ENCODE measurements at regions of chr17 and their contacts with region 1.

Region 1: GRCh38 chr17:63611354-63611753 is 10.7 kb downstream of the TACO1 start:
- DNase-seq: no peak
- H3K4me3 ChIP-seq: no peak overlapping the region
- H3K27ac ChIP-seq: no peak overlapping the region
- H3K4me1 ChIP-seq: no peaks in the 10 kb centered on the region
- H3K27me3 ChIP-seq: no peaks in the 10 kb centered on the region
- CTCF ChIP-seq: no peak
- EP300 ChIP-seq: no peak
- POLR2A ChIP-seq: no peak

Region 2: GRCh38 chr17:63419949-63420867 is 191.1 kb before region 1 on chr17:
- intact Hi-C with region 1: loop called in 3 of 4 experiments (anchors 5 kb)
- DNase-seq: no peak
- H3K4me3 ChIP-seq: no peak overlapping the region
- H3K27ac ChIP-seq: no peak overlapping the region
- H3K4me1 ChIP-seq: no peaks in the 10 kb centered on the region
- H3K27me3 ChIP-seq: no peaks in the 10 kb centered on the region
- CTCF ChIP-seq: no peak
- EP300 ChIP-seq: no peak
- POLR2A ChIP-seq: no peak

Region 3: GRCh38 chr17:63425482-63425881 is 185.9 kb before region 1 on chr17:
- intact Hi-C with region 1: loop called (anchors 5 kb)
- DNase-seq: peak; percentile 73 to 81 (median 78)
- H3K4me3 ChIP-seq: no peak overlapping the region
- H3K27ac ChIP-seq: no peak overlapping the region
- H3K4me1 ChIP-seq: peaks cover 1% of the 10 kb centered on the region
- H3K27me3 ChIP-seq: no peaks in the 10 kb centered on the region
- CTCF ChIP-seq: peak; percentile 51 to 89 (median 87)
- EP300 ChIP-seq: no peak
- POLR2A ChIP-seq: no peak

Region 4: GRCh38 chr17:63549946-63550807 is 61.2 kb before region 1 on chr17 and contains the start of gene DCAF7:
- intact Hi-C with region 1: loop called in 1 of 4 experiments (anchors 10 kb)
- DNase-seq: peak; percentile 99 to 100 (median 100)
- H3K4me3 ChIP-seq: peak within 1 kb of the TSS; percentile 99
- H3K27ac ChIP-seq: peak within 1 kb of the TSS; percentile 51 to 85
- H3K4me1 ChIP-seq: peaks cover 7% of the 10 kb centered on the region
- H3K27me3 ChIP-seq: no peaks in the 10 kb centered on the region
- CTCF ChIP-seq: no peak
- EP300 ChIP-seq: no peak
- POLR2A ChIP-seq: peak; percentile 29
- total RNA-seq, gene DCAF7: 14.9 to 56.6 (median 49.7) TPM

Region 5: GRCh38 chr17:63675607-63676413 is 64.5 kb after region 1 on chr17:
- intact Hi-C with region 1: no loop called
- DNase-seq: peak; percentile 62 to 81 (median 74)
- H3K4me3 ChIP-seq: peak overlapping the region; percentile 7
- H3K27ac ChIP-seq: peak overlapping the region in 1 of 2 donors; percentile 55
- H3K4me1 ChIP-seq: peaks cover 11% of the 10 kb centered on the region
- H3K27me3 ChIP-seq: no peaks in the 10 kb centered on the region
- CTCF ChIP-seq: no peak
- EP300 ChIP-seq: no peak
- POLR2A ChIP-seq: no peak

Measured in ovary (tissue), 10 donors.